Dendritic cell treated with granulocyte-macrophage colony-stimulating factor and Interleukin-4, amounts not matched to agents 40 ng/mL and 50 ng/mL, for 4 days (primary cell): ENCODE measurements at regions of chr16 and their contacts with region 1.

Region 1: DNA sequence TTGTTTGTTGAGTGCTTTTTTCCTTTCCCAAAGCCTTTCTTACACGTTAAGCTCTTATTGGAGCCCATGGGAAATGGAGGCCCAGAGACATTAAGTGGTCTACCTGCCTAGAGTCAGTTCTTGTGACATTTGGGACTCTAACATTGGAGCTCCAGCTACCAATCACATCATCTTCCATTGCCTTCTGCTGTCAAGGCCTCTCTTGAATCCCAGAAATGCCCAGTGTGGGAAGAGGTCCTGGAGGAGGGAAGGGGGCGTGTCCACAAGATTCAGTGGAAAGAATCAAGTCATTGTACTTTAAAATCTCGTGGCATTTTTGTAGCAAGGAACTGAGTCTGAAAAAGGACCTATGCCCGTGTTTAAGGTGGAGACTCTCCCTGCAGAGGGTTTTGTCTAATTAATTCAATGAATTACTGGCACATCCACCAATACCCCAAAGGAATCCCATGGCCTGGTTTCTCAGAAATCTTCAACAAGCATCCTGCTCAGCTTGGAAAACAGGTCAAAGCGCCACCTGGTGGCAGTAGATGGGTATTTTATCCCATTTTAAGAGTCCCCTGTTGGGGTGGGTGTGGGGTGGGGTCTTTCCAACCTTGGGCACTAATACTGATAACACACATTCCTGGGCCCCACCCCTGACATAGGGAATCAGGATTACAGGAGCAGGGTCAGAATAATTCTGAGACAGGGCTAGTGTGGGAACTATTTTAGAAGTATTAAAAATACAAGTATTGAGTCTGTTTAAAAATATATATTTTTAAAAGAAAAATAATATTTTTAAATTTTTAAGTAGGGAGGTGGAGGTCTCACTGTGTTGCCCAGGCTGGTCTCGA is 24.6 kb downstream of the GPT2 start:
- H3K4me3 Mint-ChIP-seq: no peak overlapping the region
- H3K27ac Mint-ChIP-seq: no peak overlapping the region
- H3K4me1 Mint-ChIP-seq: no peaks in the 10 kb centered on the region
- H3K27me3 Mint-ChIP-seq: no peaks in the 10 kb centered on the region

Region 2: GRCh38 chr16:46673320-46674013 is 235.3 kb before region 1 on chr16:
- intact Hi-C with region 1: loop called (anchors 1 kb)
- H3K4me3 Mint-ChIP-seq: no peak overlapping the region
- H3K27ac Mint-ChIP-seq: no peak overlapping the region
- H3K4me1 Mint-ChIP-seq: peaks cover 8% of the 10 kb centered on the region
- H3K27me3 Mint-ChIP-seq: no peaks in the 10 kb centered on the region

Region 3: GRCh38 chr16:46853713-46854443 is 54.9 kb before region 1 on chr16:
- intact Hi-C with region 1: loop called (anchors 1 kb)
- H3K4me3 Mint-ChIP-seq: no peak overlapping the region
- H3K27ac Mint-ChIP-seq: no peak overlapping the region
- H3K4me1 Mint-ChIP-seq: no peaks in the 10 kb centered on the region
- H3K27me3 Mint-ChIP-seq: no peaks in the 10 kb centered on the region